ENCODE measurements at regions of chr12 and their contacts with region 1.

Region 1: DNA sequence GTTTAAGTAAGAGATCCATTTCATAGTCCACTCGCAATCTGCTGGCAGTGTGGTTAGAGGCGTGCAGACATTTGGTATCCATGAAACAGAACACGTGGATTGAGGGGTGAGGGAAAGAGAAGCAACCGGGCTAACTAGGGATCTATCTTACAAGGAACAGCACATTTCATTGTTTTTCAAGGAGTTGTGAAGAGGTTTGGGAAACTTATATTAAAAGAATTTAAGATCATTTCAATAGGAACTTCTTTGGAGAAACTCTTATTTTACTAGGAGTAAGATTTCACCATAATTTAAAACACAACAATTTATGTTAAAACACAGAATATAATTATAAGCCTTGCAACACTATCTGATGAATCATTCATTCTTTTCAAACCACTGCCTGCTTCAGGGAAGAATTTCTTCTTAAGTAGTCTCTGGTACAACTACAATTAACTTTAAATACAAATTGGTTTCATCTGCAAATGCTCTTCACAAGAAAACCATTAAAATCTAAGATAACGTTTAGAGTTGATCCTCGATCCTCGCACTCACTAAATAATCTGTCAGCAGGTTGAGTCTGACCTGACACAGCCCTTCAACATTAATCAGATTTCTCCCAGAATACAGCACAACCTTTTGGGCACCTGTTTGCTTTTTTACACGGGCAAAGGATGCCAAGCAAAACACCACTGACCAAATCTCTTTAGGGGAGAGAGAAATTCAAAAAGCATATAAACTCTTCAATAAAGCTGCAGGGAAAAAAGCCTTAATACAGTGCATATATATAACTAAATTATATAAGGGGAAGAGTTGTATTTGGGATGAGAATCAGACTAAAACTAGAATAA is 27.3 kb downstream of the PPTC7 start:
- DNase-seq: no peak
- ATAC-seq: no peak
- H3K4me3 Mint-ChIP-seq: no peak overlapping the region
- H3K27ac Mint-ChIP-seq: no peak overlapping the region
- H3K4me1 Mint-ChIP-seq: peaks cover 20% of the 10 kb centered on the region
- H3K27me3 Mint-ChIP-seq: no peaks in the 10 kb centered on the region

Region 2: GRCh38 chr12:110367181-110367864 is 188.5 kb before region 1 on chr12:
- CTCF ChIA-PET with region 1: no interaction called
- POLR2A ChIA-PET with region 1: no interaction called
- DNase-seq: no peak
- ATAC-seq: no peak
- H3K4me3 Mint-ChIP-seq: no peak overlapping the region
- H3K27ac Mint-ChIP-seq: no peak overlapping the region
- H3K4me1 Mint-ChIP-seq: no peaks in the 10 kb centered on the region
- H3K27me3 Mint-ChIP-seq: no peaks in the 10 kb centered on the region

Region 3: DNA sequence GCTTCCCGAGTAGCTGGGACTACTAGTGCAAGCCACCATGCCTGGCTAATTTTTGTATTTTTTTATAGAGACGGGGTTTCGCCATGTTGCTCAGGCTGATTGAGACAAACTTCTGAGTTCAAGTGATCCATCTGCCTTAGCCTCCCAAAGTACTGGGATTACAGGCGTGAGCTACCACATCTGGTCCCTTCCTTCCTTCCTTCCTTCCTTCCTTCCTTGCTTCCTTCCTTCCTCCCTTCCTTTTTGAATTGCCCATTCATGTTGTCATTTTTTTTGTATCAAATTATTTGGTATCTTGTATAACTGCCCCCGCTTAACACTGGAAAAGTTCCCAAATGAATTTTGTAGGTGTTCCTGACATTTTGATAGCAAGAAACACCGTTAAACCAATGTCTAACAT is 42.0 kb before region 1 on chr12:
- CTCF ChIA-PET with region 1: interaction called, 17 read pairs
- POLR2A ChIA-PET with region 1: no interaction called
- DNase-seq: no peak
- ATAC-seq: no peak
- H3K4me3 Mint-ChIP-seq: no peak overlapping the region
- H3K27ac Mint-ChIP-seq: no peak overlapping the region
- H3K4me1 Mint-ChIP-seq: peaks cover 2% of the 10 kb centered on the region
- H3K27me3 Mint-ChIP-seq: peaks cover 11% of the 10 kb centered on the region

Region 4: GRCh38 chr12:110531741-110532333 is 24.0 kb before region 1 on chr12:
- CTCF ChIA-PET with region 1: interaction called, 12 read pairs
- POLR2A ChIA-PET with region 1: no interaction called
- DNase-seq: no peak
- ATAC-seq: no peak
- H3K4me3 Mint-ChIP-seq: no peak overlapping the region
- H3K27ac Mint-ChIP-seq: no peak overlapping the region
- H3K4me1 Mint-ChIP-seq: peaks cover 19% of the 10 kb centered on the region
- H3K27me3 Mint-ChIP-seq: no peaks in the 10 kb centered on the region

Region 5: DNA sequence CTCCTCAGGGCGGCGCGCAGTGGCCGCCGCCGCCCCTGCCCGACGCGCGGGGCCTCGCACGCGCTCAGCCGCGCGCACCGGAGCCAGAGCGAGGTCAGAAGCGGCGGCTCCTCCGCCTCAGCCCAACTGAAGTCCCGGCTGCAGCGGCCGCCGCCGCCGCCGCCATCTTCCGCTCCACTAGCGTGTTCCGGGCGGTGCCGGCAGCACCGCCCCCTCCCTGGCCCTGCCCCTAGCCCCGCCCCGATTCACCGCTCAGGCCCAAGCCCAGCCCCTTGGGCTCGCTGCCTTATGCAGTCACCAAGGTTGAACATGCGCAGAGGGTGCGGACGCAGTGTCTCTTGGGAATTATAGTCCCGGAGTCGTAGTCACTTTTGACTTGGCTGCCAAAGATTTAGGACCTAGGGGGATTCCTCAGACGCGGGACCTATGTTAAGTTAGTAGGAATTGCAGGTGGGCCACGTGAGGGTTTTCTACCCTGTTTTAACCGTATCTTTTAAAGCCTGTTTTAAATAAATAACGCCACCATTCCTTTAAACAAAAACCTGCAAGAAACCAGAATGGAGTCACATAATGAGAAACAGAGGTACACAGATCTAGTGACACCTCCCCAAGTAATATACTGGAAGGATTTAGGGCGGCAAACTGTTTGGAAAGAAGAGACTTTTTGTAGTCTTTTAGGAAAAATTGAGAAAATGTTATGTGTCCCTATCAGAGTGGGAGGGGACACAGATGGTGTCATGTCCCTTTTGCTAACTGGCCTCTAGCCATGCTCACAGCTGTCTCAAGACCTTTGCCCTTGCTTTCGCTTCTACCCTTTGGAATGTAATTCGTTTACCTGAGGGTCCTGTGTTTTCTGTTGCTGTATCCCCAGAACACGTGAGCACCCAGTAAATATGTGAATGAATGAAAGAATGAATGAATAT is 27.6 kb after region 1 on chr12 and contains the start of gene PPTC7:
- CTCF ChIA-PET with region 1: interaction called, 32 read pairs
- POLR2A ChIA-PET with region 1: interaction called, 6 read pairs
- DNase-seq: peak; percentile 98
- ATAC-seq: peak; percentile 95
- H3K4me3 Mint-ChIP-seq: peak within 1 kb of the TSS; percentile 92
- H3K27ac Mint-ChIP-seq: peak within 1 kb of the TSS; percentile 88
- H3K4me1 Mint-ChIP-seq: peaks cover 64% of the 10 kb centered on the region
- H3K27me3 Mint-ChIP-seq: no peaks in the 10 kb centered on the region
- total RNA-seq, gene PPTC7: 24.4 to 26.8 TPM

Region 6: DNA sequence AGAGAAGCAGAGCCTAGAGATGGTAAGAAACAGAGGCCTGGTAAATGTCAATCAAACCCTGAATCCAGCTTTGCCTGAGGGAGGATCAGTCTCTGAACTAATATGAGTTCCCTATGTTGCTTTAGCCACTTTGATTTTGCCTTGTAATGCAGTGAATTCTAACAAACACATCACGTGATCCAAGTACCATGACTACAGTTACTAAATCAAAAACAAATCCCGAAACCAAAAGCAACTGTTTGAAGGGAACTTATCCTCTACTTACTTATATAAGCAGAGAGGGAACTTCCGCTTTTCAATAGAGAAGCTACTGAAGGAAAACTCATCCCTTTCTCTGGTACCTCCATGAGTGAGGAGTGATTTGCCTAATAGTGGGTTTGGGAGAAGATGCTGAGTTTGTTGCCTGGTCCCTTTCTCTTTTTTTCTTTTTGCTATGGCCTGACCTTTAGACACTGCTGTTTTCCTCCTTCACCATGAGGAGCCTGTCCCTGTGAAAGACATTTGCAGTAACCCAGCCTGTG is 35.1 kb after region 1 on chr12:
- CTCF ChIA-PET with region 1: interaction called, 259 read pairs
- POLR2A ChIA-PET with region 1: interaction called, 6 read pairs
- DNase-seq: no peak
- ATAC-seq: peak; percentile 77
- H3K4me3 Mint-ChIP-seq: no peak overlapping the region
- H3K27ac Mint-ChIP-seq: peak overlapping the region; percentile 15
- H3K4me1 Mint-ChIP-seq: peaks cover 17% of the 10 kb centered on the region
- H3K27me3 Mint-ChIP-seq: no peaks in the 10 kb centered on the region

Measured in activated CD8-positive, alpha-beta T cell treated with anti-CD3 and anti-CD28 coated beads, Interleukin-2, amount 10 ng/mL, durations not matched to agents 7 days and 5 days (primary cell).